Panc1 (cell line): ENCODE measurements at regions of chr1 and their contacts with region 1.

Region 1: DNA sequence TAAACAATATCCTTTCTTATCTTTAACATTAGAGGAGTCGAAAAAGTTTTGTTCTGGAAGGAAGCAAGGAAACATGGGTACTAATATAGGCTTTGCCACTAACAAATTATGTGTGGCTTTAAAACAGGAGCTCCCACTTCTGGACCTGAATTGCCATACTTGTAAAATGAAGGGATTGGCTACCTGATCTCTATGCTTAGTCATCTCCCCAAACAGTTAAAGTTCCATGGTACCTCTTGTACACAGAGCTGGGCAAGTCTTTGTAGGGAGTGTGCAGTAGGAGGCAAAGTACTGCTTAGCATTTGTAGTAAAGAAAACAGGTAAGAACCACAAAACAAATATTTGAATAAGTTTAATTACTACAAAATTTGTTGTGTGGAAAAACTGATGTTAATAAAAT is 81.3 kb downstream of the MAST2 start:
- DNase-seq: no peak
- ATAC-seq: no peak; the same call in 1 of the 2 replicates
- H3K4me3 ChIP-seq: no peak overlapping the region
- H3K27ac ChIP-seq: peak overlapping the region; percentile 35; the same call in 1 of the 2 replicates
- H3K4me1 ChIP-seq: peaks cover 9% of the 10 kb centered on the region
- H3K27me3 ChIP-seq: no peaks in the 10 kb centered on the region
- CTCF ChIP-seq: no peak

Region 2: GRCh38 chr1:45410850-45411314 is 473.8 kb before region 1 on chr1:
- CTCF ChIA-PET with region 1: no interaction called
- POLR2A ChIA-PET with region 1: no interaction called
- in situ Hi-C with region 1: no loop called
- intact Hi-C with region 1: no loop called
- DNase-seq: no peak
- ATAC-seq: no peak
- H3K4me3 ChIP-seq: no peak overlapping the region
- H3K27ac ChIP-seq: no peak overlapping the region
- H3K4me1 ChIP-seq: no peaks in the 10 kb centered on the region
- H3K27me3 ChIP-seq: no peaks in the 10 kb centered on the region
- CTCF ChIP-seq: no peak

Region 3: GRCh38 chr1:45686317-45687013 is 198.2 kb before region 1 on chr1 and contains the start of gene GPBP1L1:
- CTCF ChIA-PET with region 1: no interaction called
- POLR2A ChIA-PET with region 1: no interaction called
- in situ Hi-C with region 1: no loop called
- intact Hi-C with region 1: loop called (anchors 5 kb)
- DNase-seq: peak; percentile 91
- ATAC-seq: peak; percentile 87
- H3K4me3 ChIP-seq: peak within 1 kb of the TSS; percentile 99 to 100
- H3K27ac ChIP-seq: peak within 1 kb of the TSS; percentile 100
- H3K4me1 ChIP-seq: peaks cover 36% of the 10 kb centered on the region
- H3K27me3 ChIP-seq: no peaks in the 10 kb centered on the region
- CTCF ChIP-seq: no peak
- total RNA-seq, gene GPBP1L1: 130 TPM

Region 4: GRCh38 chr1:45750298-45751038 is 134.2 kb before region 1 on chr1 and contains the start of gene IPP:
- CTCF ChIA-PET with region 1: interaction called, 10 read pairs
- POLR2A ChIA-PET with region 1: no interaction called
- in situ Hi-C with region 1: no loop called
- intact Hi-C with region 1: no loop called
- DNase-seq: peak; percentile 81
- ATAC-seq: peak; percentile 99
- H3K4me3 ChIP-seq: peak within 1 kb of the TSS; percentile 76 to 93
- H3K27ac ChIP-seq: peak within 1 kb of the TSS; percentile 98
- H3K4me1 ChIP-seq: peaks cover 2% of the 10 kb centered on the region; the same call in 1 of the 2 replicates
- H3K27me3 ChIP-seq: no peaks in the 10 kb centered on the region
- CTCF ChIP-seq: no peak; the same call in 1 of the 2 replicates
- total RNA-seq, gene IPP: 28.8 TPM

Region 5: GRCh38 chr1:45836451-45836850 is 48.2 kb before region 1 on chr1:
- CTCF ChIA-PET with region 1: no interaction called
- POLR2A ChIA-PET with region 1: interaction called, 10 read pairs
- in situ Hi-C with region 1: no loop called
- intact Hi-C with region 1: no loop called
- DNase-seq: no peak
- ATAC-seq: no peak
- H3K4me3 ChIP-seq: no peak overlapping the region
- H3K27ac ChIP-seq: no peak overlapping the region
- H3K4me1 ChIP-seq: no peaks in the 10 kb centered on the region
- H3K27me3 ChIP-seq: no peaks in the 10 kb centered on the region
- CTCF ChIP-seq: no peak